ENCODE measurements at regions of chrX and their contacts with region 1.

Region 1: DNA sequence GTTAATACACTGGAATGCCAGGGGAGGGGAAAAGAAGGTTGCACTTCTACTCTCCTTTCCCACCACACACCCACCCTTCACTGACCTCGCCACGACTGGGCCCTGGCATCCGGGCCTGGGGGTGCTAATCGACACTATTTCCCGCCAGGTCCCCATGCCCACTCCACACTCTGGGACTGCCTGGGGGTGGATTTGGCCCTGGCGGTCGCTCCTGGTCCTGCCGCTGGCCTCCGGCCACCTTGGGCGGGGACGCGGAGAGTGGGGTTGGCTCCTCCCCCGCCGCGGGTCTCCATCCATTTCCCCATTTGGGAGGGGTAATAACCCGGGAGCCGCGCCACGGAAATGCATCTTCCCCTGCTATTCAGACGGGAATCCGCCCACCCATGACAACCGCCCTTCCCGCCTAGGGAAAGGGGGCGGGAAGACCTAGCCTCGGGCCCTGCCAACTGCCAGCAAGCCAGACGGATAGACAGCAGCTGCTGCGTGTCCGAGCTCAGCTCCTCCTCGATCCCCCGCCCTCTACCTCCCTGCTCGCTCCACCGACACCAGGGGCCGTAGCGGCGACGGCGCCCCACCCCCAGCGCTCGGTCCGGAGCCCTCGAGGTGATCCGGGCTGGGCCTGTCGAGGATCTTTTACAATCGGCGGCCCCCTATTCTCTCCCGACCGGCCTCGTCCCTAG is 78.1 kb downstream of the RLIM start:
- DNase-seq: peak in 6 of 9 donors; percentile 6 to 35 (median 12)
- ATAC-seq: peak; percentile 73
- H3K4me3 ChIP-seq: peak overlapping the region; percentile 63
- H3K4me3 Mint-ChIP-seq: peak overlapping the region; percentile 75 to 89 (median 85)
- H3K27ac ChIP-seq: peak overlapping the region; percentile 54
- H3K27ac Mint-ChIP-seq: peak overlapping the region in 8 of 9 donors; percentile 51 to 80 (median 68)
- H3K4me1 ChIP-seq: peaks cover 0 to 3% of the 10 kb centered on the region in 2 donors
- H3K4me1 Mint-ChIP-seq: peaks cover 0 to 18% (median 7%) of the 10 kb centered on the region in 7 donors
- H3K27me3 ChIP-seq: no peaks in the 10 kb centered on the region
- H3K27me3 Mint-ChIP-seq: no peaks in the 10 kb centered on the region

Region 2: DNA sequence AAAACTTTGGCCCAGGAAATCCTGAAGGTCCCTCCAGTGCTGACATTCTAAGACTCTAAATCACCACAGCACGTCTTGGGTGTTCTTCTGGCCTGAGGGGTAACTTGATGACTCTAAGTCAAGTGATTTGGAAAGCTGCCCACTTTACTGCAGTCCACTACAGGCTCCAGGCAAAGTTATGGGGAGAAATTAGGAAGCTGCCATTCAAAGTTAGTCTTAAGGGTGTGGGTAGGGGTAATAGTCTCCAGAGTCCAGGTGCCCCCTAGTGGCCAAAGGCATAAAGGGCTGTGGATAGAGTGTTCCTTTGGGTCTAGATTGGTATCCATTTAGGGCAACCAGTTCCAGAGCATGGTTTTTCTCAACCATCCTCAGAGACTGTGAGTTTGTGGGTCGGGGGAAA is 153.7 kb before region 1 on chrX:
- CTCF ChIA-PET with region 1: no interaction called
- POLR2A ChIA-PET with region 1: no interaction called
- intact Hi-C with region 1: loop called in 1 of 2 experiments (anchors 5 kb)
- DNase-seq: peak; percentile 11 to 50 (median 30)
- ATAC-seq: peak; percentile 82
- H3K4me3 ChIP-seq: no peak overlapping the region
- H3K4me3 Mint-ChIP-seq: no peak overlapping the region
- H3K27ac ChIP-seq: no peak overlapping the region
- H3K27ac Mint-ChIP-seq: no peak overlapping the region
- H3K4me1 ChIP-seq: no peaks in the 10 kb centered on the region
- H3K4me1 Mint-ChIP-seq: no peaks in the 10 kb centered on the region
- H3K27me3 ChIP-seq: no peaks in the 10 kb centered on the region
- H3K27me3 Mint-ChIP-seq: peaks cover 0 to 6% (median 5%) of the 10 kb centered on the region in 5 donors

Region 3: GRCh38 chrX:74421036-74421739 is 115.1 kb before region 1 on chrX and contains the start of gene SLC16A2:
- CTCF ChIA-PET with region 1: no interaction called
- POLR2A ChIA-PET with region 1: no interaction called
- intact Hi-C with region 1: loop called in 1 of 2 experiments (anchors 10 kb)
- DNase-seq: peak in 7 of 9 donors; percentile 16 to 44 (median 30)
- ATAC-seq: peak; percentile 58
- H3K4me3 ChIP-seq: peak within 1 kb of the TSS; percentile 41
- H3K4me3 Mint-ChIP-seq: peak within 1 kb of the TSS; percentile 81 to 91 (median 86)
- H3K27ac ChIP-seq: no peak within 1 kb of the TSS
- H3K27ac Mint-ChIP-seq: peak within 1 kb of the TSS in 2 of 9 donors; percentile 60 to 65
- H3K4me1 ChIP-seq: peaks cover 3% of the 10 kb centered on the region in 2 donors
- H3K4me1 Mint-ChIP-seq: peaks cover 0 to 14% (median 9%) of the 10 kb centered on the region in 7 donors
- H3K27me3 ChIP-seq: no peaks in the 10 kb centered on the region
- H3K27me3 Mint-ChIP-seq: peaks cover 0 to 59% (median 21%) of the 10 kb centered on the region in 5 donors
- total RNA-seq, gene SLC16A2: 0.27 to 0.38 (median 0.38) TPM in 3 of 5 experiments, not detected in the others